T-cell (primary cell): ENCODE measurements at regions of chr5 and their contacts with region 1.

Region 1: GRCh38 chr5:56126487-56127179 is 106.5 kb downstream of the ANKRD55 start:
- DNase-seq: peak in 1 of 35 experiments; percentile 16
- ATAC-seq: peak in 2 of 4 experiments; percentile 47 to 49
- H3K4me3 ChIP-seq: no peak overlapping the region
- H3K4me3 Mint-ChIP-seq: peak overlapping the region; percentile 43 to 65 (median 53)
- H3K27ac ChIP-seq: peak overlapping the region; percentile 51
- H3K27ac Mint-ChIP-seq: peak overlapping the region; percentile 97 to 98
- H3K4me1 ChIP-seq: peaks cover 32 to 37% of the 10 kb centered on the region in 2 experiments
- H3K4me1 Mint-ChIP-seq: peaks cover 48 to 63% (median 60%) of the 10 kb centered on the region in 3 donors
- H3K27me3 ChIP-seq: no peaks in the 10 kb centered on the region
- H3K27me3 Mint-ChIP-seq: no peaks in the 10 kb centered on the region

Region 2: DNA sequence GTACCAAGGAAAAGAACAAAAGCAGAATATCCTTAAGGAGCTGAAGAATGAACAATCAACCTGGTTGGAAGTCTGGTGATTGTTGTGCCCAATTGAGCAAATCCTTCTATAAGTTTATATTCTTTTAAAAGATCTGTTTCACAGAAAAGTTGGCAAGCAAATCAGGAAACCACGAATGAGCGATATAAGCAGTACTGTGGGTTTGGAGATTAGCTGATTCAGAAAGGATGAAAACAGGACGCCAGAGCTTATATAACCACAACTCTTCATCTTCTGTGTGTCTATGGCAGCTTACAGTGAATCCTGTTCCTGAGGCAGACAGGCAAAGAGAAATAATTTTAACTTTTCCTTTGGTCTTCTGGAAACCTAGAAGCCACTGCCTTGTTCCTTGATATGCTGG is 476.2 kb before region 1 on chr5:
- CTCF ChIA-PET with region 1: no interaction called
- POLR2A ChIA-PET with region 1: no interaction called
- DNase-seq: peak in 11 of 35 experiments; percentile 1 to 50 (median 4)
- ATAC-seq: peak; percentile 87 to 100 (median 90)
- H3K4me3 ChIP-seq: no peak overlapping the region
- H3K4me3 Mint-ChIP-seq: peak overlapping the region in 1 of 3 donors; percentile 39
- H3K27ac ChIP-seq: peak overlapping the region; percentile 21
- H3K27ac Mint-ChIP-seq: peak overlapping the region; percentile 80 to 89
- H3K4me1 ChIP-seq: peaks cover 11 to 16% of the 10 kb centered on the region in 2 experiments
- H3K4me1 Mint-ChIP-seq: peaks cover 23 to 28% (median 27%) of the 10 kb centered on the region in 3 donors
- H3K27me3 ChIP-seq: no peaks in the 10 kb centered on the region
- H3K27me3 Mint-ChIP-seq: no peaks in the 10 kb centered on the region

Region 3: DNA sequence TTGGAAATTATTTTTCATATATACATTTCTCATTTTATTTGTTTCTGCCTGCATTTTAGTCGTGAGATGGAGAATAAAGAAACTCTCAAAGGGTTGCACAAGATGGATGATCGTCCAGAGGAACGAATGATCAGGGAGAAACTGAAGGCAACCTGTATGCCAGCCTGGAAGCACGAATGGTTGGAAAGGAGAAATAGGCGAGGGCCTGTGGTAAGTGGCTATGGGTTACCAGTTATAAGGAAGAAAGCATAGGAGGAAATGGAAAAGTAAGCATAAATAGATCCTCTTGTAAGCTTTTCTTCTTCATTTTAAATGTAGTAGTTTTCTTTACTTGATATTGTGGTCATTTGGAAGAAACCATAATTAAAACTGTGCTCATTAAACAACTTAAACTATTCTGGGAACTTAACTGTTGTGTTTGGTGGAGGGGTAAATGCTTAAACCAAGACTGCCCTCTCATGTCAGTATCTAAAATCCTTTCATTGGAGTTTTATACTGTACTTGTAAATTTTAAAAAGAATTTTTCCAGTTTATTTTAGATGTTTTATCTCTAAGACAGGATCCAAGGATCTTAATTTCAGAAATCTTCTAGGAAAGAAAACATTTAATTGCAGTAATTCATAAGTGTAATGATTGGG is 730.0 kb after region 1 on chr5:
- CTCF ChIA-PET with region 1: no interaction called
- POLR2A ChIA-PET with region 1: interaction called in 1 of 2 experiments, 19 read pairs
- DNase-seq: no peak
- ATAC-seq: no peak
- H3K4me3 ChIP-seq: no peak overlapping the region
- H3K4me3 Mint-ChIP-seq: no peak overlapping the region
- H3K27ac ChIP-seq: no peak overlapping the region
- H3K27ac Mint-ChIP-seq: peak overlapping the region; percentile 44 to 70
- H3K4me1 ChIP-seq: peaks cover 17 to 34% of the 10 kb centered on the region in 2 experiments
- H3K4me1 Mint-ChIP-seq: peaks cover 60 to 71% (median 62%) of the 10 kb centered on the region in 3 donors
- H3K27me3 ChIP-seq: no peaks in the 10 kb centered on the region
- H3K27me3 Mint-ChIP-seq: no peaks in the 10 kb centered on the region